IMR-90 (cell line): ENCODE measurements at regions of chr4 and their contacts with region 1.

Region 1: GRCh38 chr4:102263011-102263787 is 82.1 kb downstream of the SLC39A8 start:
- DNase-seq: peak; percentile 28
- ATAC-seq: peak; percentile 79
- H3K4me3 ChIP-seq: no peak overlapping the region
- H3K27ac ChIP-seq: no peak overlapping the region
- H3K4me1 ChIP-seq: no peaks in the 10 kb centered on the region
- H3K27me3 ChIP-seq: no peaks in the 10 kb centered on the region
- CTCF ChIP-seq: peak; percentile 49
- POLR2A ChIP-seq: no peak
- RAD21 ChIP-seq: peak; percentile 61

Region 2: GRCh38 chr4:101169044-101170014 is 1093.9 kb before region 1 on chr4:
- CTCF ChIA-PET with region 1: no interaction called
- POLR2A ChIA-PET with region 1: no interaction called
- dilution Hi-C with region 1: no loop called
- in situ Hi-C with region 1: loop called (anchors 10 kb)
- intact Hi-C with region 1: loop called (anchors 10 kb)
- DNase-seq: peak; percentile 65
- ATAC-seq: peak; percentile 84
- H3K4me3 ChIP-seq: no peak overlapping the region
- H3K27ac ChIP-seq: no peak overlapping the region
- H3K4me1 ChIP-seq: no peaks in the 10 kb centered on the region; the same call in none of the 2 replicates
- H3K27me3 ChIP-seq: no peaks in the 10 kb centered on the region
- CTCF ChIP-seq: peak; percentile 70
- POLR2A ChIP-seq: 0 out of 2 replicates have a peak, but pooled peaks have one; percentile 32
- RAD21 ChIP-seq: peak; percentile 91

Region 3: GRCh38 chr4:102064747-102065442 is 198.3 kb before region 1 on chr4:
- CTCF ChIA-PET with region 1: no interaction called
- POLR2A ChIA-PET with region 1: no interaction called
- dilution Hi-C with region 1: no loop called
- in situ Hi-C with region 1: no loop called
- intact Hi-C with region 1: no loop called
- DNase-seq: no peak
- ATAC-seq: no peak
- H3K4me3 ChIP-seq: no peak overlapping the region
- H3K27ac ChIP-seq: no peak overlapping the region
- H3K4me1 ChIP-seq: no peaks in the 10 kb centered on the region
- H3K27me3 ChIP-seq: no peaks in the 10 kb centered on the region
- CTCF ChIP-seq: no peak
- POLR2A ChIP-seq: no peak
- RAD21 ChIP-seq: no peak